AG04450 (cell line): ENCODE measurements at regions of chr7 and their contacts with region 1.

Region 1: DNA sequence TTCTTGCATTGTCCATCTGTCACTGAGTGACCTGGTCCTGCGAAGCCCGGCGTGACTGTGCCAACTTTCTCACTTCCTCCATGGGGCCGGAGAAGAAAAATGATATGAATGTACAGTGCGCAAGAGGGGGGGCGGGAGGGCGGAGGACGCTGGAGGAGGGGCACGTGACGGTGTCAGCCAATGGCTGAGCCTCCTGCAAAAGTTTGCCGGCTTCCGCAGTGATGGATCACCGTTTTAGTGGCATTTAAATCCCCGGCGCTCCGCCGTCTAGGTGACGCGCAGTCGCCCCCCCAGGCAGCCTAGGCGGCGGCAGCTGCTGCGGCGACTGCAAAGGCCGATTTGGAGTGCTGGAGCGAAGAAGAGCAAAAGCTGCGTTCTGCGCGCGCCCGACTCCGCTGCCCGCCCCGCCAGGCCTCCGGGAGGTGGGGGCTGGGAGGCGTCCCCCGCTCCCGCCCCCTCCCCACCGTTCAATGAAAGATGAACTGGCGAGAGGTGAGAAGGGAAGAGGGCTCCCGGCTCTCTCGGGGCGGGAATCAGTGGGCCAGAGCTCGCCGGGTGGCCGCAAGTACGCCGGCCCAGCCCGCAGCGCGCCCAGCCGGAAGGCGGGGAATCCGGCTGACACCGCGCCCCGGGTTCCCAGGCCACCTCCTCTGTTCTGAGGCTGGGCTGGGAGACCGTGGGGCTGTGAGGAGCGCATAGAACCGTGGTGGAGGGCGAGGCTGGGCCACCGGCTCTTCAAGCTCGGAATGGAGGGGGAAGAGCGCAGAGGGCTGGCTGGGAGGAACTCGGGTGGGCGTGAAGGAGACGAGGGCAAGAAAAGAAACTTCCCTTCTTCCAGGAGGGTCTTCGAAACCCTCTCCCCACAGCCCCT is at the start of gene HOXA1:
- DNase-seq: peak; percentile 90
- H3K4me3 ChIP-seq: peak within 1 kb of the TSS; percentile 91
- H3K27ac ChIP-seq: peak within 1 kb of the TSS; percentile 94
- H3K27me3 ChIP-seq: no peaks in the 10 kb centered on the region
- CTCF ChIP-seq: no peak
- polyA plus RNA-seq, gene HOXA1: 2.6 and 2.9 TPM in 2 replicates

Region 2: GRCh38 chr7:27064159-27064558 is 32.0 kb before region 1 on chr7:
- CTCF ChIA-PET with region 1: no interaction called
- POLR2A ChIA-PET with region 1: no interaction called
- DNase-seq: no peak
- H3K4me3 ChIP-seq: no peak overlapping the region
- H3K27ac ChIP-seq: no peak overlapping the region
- H3K27me3 ChIP-seq: no peaks in the 10 kb centered on the region
- CTCF ChIP-seq: no peak

Region 3: DNA sequence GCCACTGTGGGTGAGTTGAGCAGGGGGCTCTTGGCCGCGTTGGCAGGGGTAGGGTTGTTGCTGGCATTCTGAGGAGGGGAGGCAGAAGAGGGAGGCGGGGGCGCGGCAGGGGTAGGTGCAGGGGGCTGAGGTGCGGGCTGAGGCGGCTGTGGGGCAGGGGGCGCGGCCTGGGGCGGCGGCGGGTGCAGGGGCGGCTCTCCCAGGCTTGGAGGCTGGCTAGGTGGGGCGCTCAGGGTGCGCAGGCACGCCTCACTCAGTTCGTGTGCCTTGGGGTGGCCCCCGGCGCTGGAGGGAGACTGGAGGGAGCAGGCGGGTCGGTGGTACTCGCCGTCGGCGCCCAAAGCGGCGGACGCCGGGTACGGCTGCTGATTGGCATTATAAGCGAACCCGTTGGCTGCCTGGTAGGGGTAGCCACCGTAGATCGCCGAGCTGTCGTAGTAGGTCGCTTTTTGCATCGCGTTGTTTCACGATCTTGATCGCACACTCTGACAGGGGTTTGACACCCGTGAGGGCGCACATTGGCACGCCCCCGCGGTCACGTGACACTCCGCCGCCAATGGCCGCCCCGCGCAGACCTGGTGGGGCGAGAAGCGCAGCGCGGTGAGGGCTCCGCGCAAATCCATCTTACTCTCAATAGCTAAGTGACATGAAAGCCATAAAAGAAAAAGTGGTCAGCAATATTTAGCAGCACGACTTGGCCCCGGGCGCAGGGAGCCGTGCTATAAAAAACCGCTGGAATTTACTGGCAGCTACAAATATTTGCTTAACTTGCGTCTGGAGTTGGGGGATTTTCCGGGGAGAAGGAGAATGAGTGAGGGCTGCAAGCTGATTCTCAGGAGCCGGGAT is 14.3 kb after region 1 on chr7:
- CTCF ChIA-PET with region 1: interaction called, 5 read pairs
- POLR2A ChIA-PET with region 1: interaction called, 14 read pairs
- DNase-seq: peak; percentile 68
- H3K4me3 ChIP-seq: peak overlapping the region; percentile 84
- H3K27ac ChIP-seq: peak overlapping the region; percentile 95
- H3K27me3 ChIP-seq: no peaks in the 10 kb centered on the region
- CTCF ChIP-seq: no peak

Region 4: GRCh38 chr7:27115221-27116026 is 19.3 kb after region 1 on chr7:
- CTCF ChIA-PET with region 1: interaction called, 4 read pairs
- POLR2A ChIA-PET with region 1: interaction called, 42 read pairs
- DNase-seq: peak; percentile 81
- H3K4me3 ChIP-seq: peak overlapping the region; percentile 84
- H3K27ac ChIP-seq: peak overlapping the region; percentile 98
- H3K27me3 ChIP-seq: no peaks in the 10 kb centered on the region
- CTCF ChIP-seq: no peak

Region 5: GRCh38 chr7:28759475-28759971 is 1663.4 kb after region 1 on chr7:
- CTCF ChIA-PET with region 1: no interaction called
- POLR2A ChIA-PET with region 1: no interaction called
- DNase-seq: no peak
- H3K4me3 ChIP-seq: no peak overlapping the region
- H3K27ac ChIP-seq: peak overlapping the region; percentile 13
- H3K27me3 ChIP-seq: no peaks in the 10 kb centered on the region
- CTCF ChIP-seq: no peak